PC-9 (cell line): ENCODE measurements at regions of chr20 and their contacts with region 1.

Region 1: GRCh38 chr20:51366155-51366886 is 176.2 kb downstream of the NFATC2 start:
- DNase-seq: peak; percentile 66 to 90
- H3K4me3 ChIP-seq: no peak overlapping the region
- H3K27ac ChIP-seq: peak overlapping the region; percentile 87
- H3K4me1 ChIP-seq: peaks cover 36% of the 10 kb centered on the region
- H3K27me3 ChIP-seq: no peaks in the 10 kb centered on the region
- CTCF ChIP-seq: no peak

Region 2: GRCh38 chr20:50980851-50981713 is 385.2 kb before region 1 on chr20:
- CTCF ChIA-PET with region 1: no interaction called
- POLR2A ChIA-PET with region 1: no interaction called
- intact Hi-C with region 1: loop called (anchors 5 kb)
- DNase-seq: peak; percentile 45 to 48
- H3K4me3 ChIP-seq: no peak overlapping the region
- H3K27ac ChIP-seq: no peak overlapping the region
- H3K4me1 ChIP-seq: peaks cover 7% of the 10 kb centered on the region
- H3K27me3 ChIP-seq: 0 out of 2 replicates have a peak, but pooled peaks cover under 1% of the 10 kb centered on the region
- CTCF ChIP-seq: peak; percentile 95

Region 3: GRCh38 chr20:51265361-51265760 is 101.0 kb before region 1 on chr20:
- CTCF ChIA-PET with region 1: no interaction called
- POLR2A ChIA-PET with region 1: no interaction called
- intact Hi-C with region 1: no loop called
- DNase-seq: no peak
- H3K4me3 ChIP-seq: no peak overlapping the region
- H3K27ac ChIP-seq: no peak overlapping the region
- H3K4me1 ChIP-seq: peaks cover 4% of the 10 kb centered on the region; the same call in 1 of the 2 replicates
- H3K27me3 ChIP-seq: peaks cover 60% of the 10 kb centered on the region
- CTCF ChIP-seq: no peak